Transverse colon (tissue), 4 donors: ENCODE measurements at regions of chr3 and their contacts with region 1.

Region 1: GRCh38 chr3:195532834-195533233 is 10.3 kb downstream of the PPP1R2 start:
- DNase-seq: no peak
- H3K4me3 ChIP-seq: no peak overlapping the region
- H3K27ac ChIP-seq: no peak overlapping the region
- H3K4me1 ChIP-seq: peaks cover 0 to 23% (median 2%) of the 10 kb centered on the region in 4 donors
- H3K27me3 ChIP-seq: no peaks in the 10 kb centered on the region
- CTCF ChIP-seq: no peak
- EP300 ChIP-seq: no peak
- POLR2A ChIP-seq: no peak

Region 2: GRCh38 chr3:194867270-194867991 is 665.4 kb before region 1 on chr3:
- in situ Hi-C with region 1: no loop called
- intact Hi-C with region 1: loop called (anchors 5 kb)
- DNase-seq: peak; percentile 68
- H3K4me3 ChIP-seq: no peak overlapping the region
- H3K27ac ChIP-seq: peak overlapping the region; percentile 12 to 36 (median 28)
- H3K4me1 ChIP-seq: peaks cover 16 to 43% (median 36%) of the 10 kb centered on the region in 4 donors
- H3K27me3 ChIP-seq: no peaks in the 10 kb centered on the region
- CTCF ChIP-seq: no peak
- EP300 ChIP-seq: no peak
- POLR2A ChIP-seq: peak; percentile 31

Region 3: DNA sequence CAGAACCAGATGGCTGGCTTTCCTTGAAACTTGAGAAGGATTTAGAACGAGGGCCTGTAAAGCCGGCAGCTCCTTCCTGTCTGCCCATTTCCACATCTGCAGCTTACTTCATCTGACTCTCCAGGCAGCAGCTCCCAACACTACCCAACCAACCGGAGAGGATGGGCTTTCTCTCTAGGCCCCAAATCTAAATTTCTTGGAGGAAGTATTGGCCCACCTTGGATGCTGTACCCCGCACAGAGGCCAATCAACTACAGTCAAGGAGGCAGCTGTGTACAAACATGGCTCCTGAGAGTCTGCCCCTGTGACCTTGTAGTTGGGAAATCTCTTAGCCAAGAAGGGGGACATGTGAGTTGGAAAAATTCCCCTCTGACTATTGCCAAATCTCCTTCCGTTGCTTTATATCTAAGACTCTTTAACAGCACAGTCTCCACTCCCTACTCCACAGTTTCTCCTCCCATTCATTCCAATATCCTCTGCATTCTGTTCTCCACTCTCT is 82.1 kb before region 1 on chr3:
- in situ Hi-C with region 1: no loop called
- intact Hi-C with region 1: no loop called
- DNase-seq: no peak
- H3K4me3 ChIP-seq: no peak overlapping the region
- H3K27ac ChIP-seq: peak overlapping the region in 1 of 4 donors; percentile 54
- H3K4me1 ChIP-seq: peaks cover 0 to 11% (median 0%) of the 10 kb centered on the region in 4 donors
- H3K27me3 ChIP-seq: no peaks in the 10 kb centered on the region
- CTCF ChIP-seq: no peak
- EP300 ChIP-seq: no peak
- POLR2A ChIP-seq: no peak